Activated T-helper 1 cell treated with anti-CD3 and anti-CD28 coated beads, Interleukin-12 subunit alpha, Interleukin-12 subunit beta, Interleukin-2, Interleukin-4 antibody, amounts not matched to agents 30 ng/mL and 10 ng/mL and 1 ng/mL, durations not matched to agents 14 hours and 24 hours and 36 hours (primary cell): ENCODE measurements at regions of chr13 and their contacts with region 1.

Region 1: DNA sequence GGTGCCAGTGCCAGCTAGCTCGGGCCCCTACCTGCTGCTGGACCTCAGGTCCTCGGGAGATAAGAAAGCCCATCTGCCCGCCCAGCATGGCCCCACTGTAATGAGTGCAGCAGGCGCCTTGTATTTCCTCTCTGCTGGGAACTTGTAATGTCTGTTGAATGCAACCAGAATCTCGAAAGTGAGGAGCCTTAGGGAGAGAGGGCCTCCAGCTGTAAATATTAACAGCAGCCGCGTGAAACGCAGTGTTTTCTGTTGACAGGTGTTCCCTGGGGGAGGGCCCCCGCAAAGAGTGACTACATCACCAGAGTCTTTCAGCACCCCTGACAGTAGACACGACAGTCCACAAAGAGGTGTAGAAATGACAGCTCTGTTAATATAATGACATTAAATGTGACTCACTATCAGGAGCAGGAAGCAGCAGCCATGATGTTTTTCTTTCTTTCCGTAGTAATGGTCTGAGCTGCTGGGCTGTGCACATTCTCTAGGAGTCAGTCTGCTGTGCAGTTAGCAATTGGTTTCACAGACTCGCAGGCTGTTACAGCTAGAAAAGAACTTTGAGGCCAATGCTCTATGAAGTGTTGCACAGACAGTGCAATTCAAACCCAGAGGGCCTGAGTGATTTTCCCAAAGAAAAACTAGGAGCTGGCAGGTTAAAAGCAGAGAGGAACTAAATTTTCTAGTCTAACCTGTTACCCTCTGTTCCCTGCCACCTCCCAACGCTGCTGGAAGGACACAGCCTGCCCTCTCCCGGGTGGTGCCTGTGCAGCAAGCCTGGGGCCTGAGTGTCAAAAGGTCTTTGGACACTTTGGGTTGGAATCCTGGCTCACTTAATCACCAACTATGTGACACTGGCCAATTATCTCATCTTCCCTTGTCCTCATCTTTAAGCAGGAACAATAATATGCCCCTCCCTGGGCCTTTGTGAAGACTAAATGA is 58.6 kb upstream of the WASF3 start:
- DNase-seq: no peak
- H3K4me3 Mint-ChIP-seq: no peak overlapping the region
- H3K27ac Mint-ChIP-seq: no peak overlapping the region
- H3K4me1 Mint-ChIP-seq: peaks cover 4% of the 10 kb centered on the region
- H3K27me3 Mint-ChIP-seq: peaks cover 3% of the 10 kb centered on the region

Region 2: DNA sequence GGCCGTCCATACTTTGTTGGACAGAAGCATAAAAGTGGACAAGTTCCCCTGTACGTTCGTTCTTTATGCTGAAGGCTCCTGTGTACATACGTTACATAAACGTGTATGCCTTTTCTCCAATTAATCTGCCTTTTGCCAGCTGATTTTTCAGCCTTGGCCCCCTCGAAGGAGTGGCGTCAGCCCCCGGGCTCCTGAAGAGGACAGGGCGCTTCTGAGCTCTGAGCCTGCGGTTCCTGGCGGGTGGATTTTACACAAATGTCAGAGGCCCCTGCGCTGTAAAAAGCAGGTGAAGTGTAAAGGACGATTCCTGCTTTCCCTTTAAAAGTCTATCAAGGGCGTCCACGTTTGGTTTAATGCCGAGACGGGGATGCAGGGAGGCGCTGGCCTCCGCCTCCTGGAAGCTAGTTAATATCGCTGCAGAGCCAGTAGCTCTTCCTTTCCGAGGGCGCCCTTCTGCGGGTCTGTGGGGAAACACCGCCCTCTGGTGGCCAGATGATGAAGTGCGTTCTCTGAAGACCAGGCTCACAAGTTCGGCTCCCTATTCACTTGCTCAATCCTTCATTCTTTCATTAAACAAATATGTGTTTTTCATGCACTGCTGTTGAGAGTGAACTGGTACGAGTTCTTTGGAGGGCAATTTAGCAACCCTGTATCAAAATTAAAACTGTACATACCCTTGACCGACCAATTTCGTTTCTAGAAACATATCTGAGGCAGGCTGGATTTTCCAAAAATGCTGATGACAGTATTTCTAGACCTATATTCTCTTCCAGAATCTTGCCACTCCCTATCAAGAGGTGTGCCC is 199.7 kb after region 1 on chr13:
- intact Hi-C with region 1: loop called (anchors 5 kb)
- DNase-seq: peak; percentile 68
- H3K4me3 Mint-ChIP-seq: no peak overlapping the region
- H3K27ac Mint-ChIP-seq: no peak overlapping the region
- H3K4me1 Mint-ChIP-seq: peaks cover 6% of the 10 kb centered on the region
- H3K27me3 Mint-ChIP-seq: peaks cover 6% of the 10 kb centered on the region